H1 (cell line): ENCODE measurements at regions of chr15 and their contacts with region 1.

Region 1: GRCh38 chr15:66851226-66852071 is 149.4 kb downstream of the SMAD6 start:
- DNase-seq: peak; percentile 54 to 90
- H3K4me3 ChIP-seq: no peak overlapping the region
- H3K27ac ChIP-seq: no peak overlapping the region
- H3K4me1 ChIP-seq: no peaks in the 10 kb centered on the region; a peak in 2 of 7 replicates
- H3K27me3 ChIP-seq: peaks cover 0 to 11% (median 6%) of the 10 kb centered on the region in 4 experiments; a peak in 5 of 7 replicates
- CTCF ChIP-seq: peak; percentile 95 to 97 (median 96)
- EP300 ChIP-seq: no peak
- POLR2A ChIP-seq: no peak
- RAD21 ChIP-seq: peak; percentile 80 to 90

Region 2: DNA sequence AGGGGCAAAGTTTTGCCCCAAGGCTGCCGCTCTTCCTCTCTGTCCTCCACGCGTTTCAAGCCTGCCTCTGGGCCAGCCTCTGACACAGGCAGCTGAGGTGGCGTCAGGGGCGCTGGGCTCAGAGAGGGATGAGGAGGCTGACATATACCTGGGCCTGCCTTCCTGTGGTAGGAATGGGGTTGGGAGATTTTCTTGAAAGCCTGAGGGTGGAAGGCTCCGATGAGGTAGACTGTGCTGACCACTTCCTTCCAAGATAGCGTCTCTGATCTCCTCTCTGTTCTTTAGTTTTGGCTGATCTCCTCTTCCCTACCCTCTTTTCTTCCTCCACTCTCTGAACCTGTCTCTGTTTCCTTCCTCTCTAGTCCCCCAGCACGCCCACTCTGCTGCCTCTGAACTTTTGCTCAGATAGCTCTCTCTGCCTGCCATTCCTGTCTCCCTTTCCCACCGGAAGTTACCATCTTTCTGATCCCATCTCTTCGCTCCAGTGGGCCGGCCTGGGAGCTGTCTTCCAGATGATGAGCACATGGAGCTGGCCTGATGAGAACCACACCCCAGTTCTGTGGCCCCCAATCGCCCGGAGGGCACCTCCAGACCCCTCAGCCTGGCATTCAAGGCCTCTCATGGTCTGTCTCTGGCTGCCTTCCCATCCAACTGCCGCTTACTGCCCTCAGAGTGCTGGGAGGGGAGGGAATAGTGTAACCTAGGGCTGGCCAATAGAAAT is 253.2 kb before region 1 on chr15:
- CTCF ChIA-PET with region 1: interaction called, 105 read pairs
- POLR2A ChIA-PET with region 1: no interaction called
- DNase-seq: no peak
- H3K4me3 ChIP-seq: no peak overlapping the region
- H3K27ac ChIP-seq: no peak overlapping the region
- H3K4me1 ChIP-seq: no peaks in the 10 kb centered on the region
- H3K27me3 ChIP-seq: no peaks in the 10 kb centered on the region
- CTCF ChIP-seq: no peak
- EP300 ChIP-seq: no peak
- POLR2A ChIP-seq: no peak
- RAD21 ChIP-seq: no peak

Region 3: GRCh38 chr15:66619151-66619903 is 232.1 kb before region 1 on chr15:
- CTCF ChIA-PET with region 1: interaction called, 24 read pairs
- POLR2A ChIA-PET with region 1: no interaction called
- DNase-seq: peak; percentile 44 to 91
- H3K4me3 ChIP-seq: no peak overlapping the region
- H3K27ac ChIP-seq: no peak overlapping the region
- H3K4me1 ChIP-seq: peaks cover 18 to 31% (median 24%) of the 10 kb centered on the region in 4 experiments
- H3K27me3 ChIP-seq: peaks cover 0 to 5% (median 1%) of the 10 kb centered on the region in 4 experiments; a peak in 4 of 7 replicates
- CTCF ChIP-seq: peak; percentile 82 to 89 (median 88)
- EP300 ChIP-seq: no peak
- POLR2A ChIP-seq: no peak
- RAD21 ChIP-seq: peak; percentile 82 to 86

Region 4: GRCh38 chr15:66707310-66708082 is 144.0 kb before region 1 on chr15:
- CTCF ChIA-PET with region 1: interaction called, 57 read pairs
- POLR2A ChIA-PET with region 1: no interaction called
- DNase-seq: peak; percentile 70 to 74
- H3K4me3 ChIP-seq: no peak overlapping the region; a peak in 1 of 8 replicates
- H3K27ac ChIP-seq: no peak overlapping the region
- H3K4me1 ChIP-seq: peaks cover 0 to 25% (median 14%) of the 10 kb centered on the region in 4 experiments; a peak in 6 of 7 replicates
- H3K27me3 ChIP-seq: peaks cover 18 to 34% (median 27%) of the 10 kb centered on the region in 4 experiments; a peak in 6 of 7 replicates
- CTCF ChIP-seq: peak; percentile 57 to 72 (median 61)
- EP300 ChIP-seq: no peak
- POLR2A ChIP-seq: no peak
- RAD21 ChIP-seq: peak; percentile 53 to 70

Region 5: GRCh38 chr15:66774001-66774814 is 77.2 kb before region 1 on chr15:
- CTCF ChIA-PET with region 1: interaction called, 202 read pairs
- POLR2A ChIA-PET with region 1: interaction called, 4 read pairs
- DNase-seq: peak; percentile 68 to 95
- H3K4me3 ChIP-seq: peak overlapping the region in 1 of 4 experiments; percentile 23; a peak in 3 of 8 replicates
- H3K27ac ChIP-seq: peak overlapping the region; percentile 56
- H3K4me1 ChIP-seq: peaks cover 11 to 24% (median 18%) of the 10 kb centered on the region in 4 experiments
- H3K27me3 ChIP-seq: no peaks in the 10 kb centered on the region
- CTCF ChIP-seq: peak; percentile 94 to 95 (median 95)
- EP300 ChIP-seq: peak in 1 of 2 experiments; percentile 60; a peak in 1 of 3 replicates
- POLR2A ChIP-seq: no peak
- RAD21 ChIP-seq: peak; percentile 87 to 92

Region 6: DNA sequence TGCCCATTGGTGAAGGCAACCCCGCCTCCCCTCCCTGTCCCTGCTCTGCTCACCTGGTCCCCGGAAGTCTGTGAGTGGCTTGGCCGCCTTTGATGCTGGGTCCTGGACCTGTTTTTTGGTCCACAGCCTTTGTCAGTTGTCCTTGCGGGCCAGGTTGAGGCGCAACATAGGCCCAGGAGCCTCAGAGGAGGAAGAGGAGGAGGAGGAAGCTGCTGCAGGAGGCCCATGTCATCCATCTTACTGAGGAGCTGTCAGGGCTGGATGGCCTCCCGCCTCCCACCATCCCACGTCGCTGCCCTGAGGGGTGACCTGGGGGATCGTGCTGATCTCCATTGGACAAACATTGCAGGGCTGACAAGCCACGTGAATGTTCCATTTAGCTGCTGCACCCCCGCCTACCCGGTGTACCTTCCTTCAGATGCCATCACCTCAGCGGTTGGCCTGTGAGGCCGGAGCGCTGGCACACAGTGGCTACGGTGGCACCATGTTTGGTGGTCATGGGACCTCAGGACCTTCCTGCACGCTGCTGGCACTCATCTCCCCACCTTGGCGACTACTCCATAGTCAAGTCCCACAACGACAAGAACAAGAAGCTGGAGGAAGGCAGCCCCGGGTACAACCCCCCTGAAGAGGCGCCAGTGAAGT is 43.1 kb before region 1 on chr15:
- CTCF ChIA-PET with region 1: interaction called, 17 read pairs
- POLR2A ChIA-PET with region 1: no interaction called
- DNase-seq: no peak
- H3K4me3 ChIP-seq: no peak overlapping the region
- H3K27ac ChIP-seq: no peak overlapping the region
- H3K4me1 ChIP-seq: peaks cover 0 to 4% (median 4%) of the 10 kb centered on the region in 4 experiments; a peak in 4 of 7 replicates
- H3K27me3 ChIP-seq: peaks cover 0 to 2% (median 0%) of the 10 kb centered on the region in 4 experiments; a peak in 1 of 7 replicates
- CTCF ChIP-seq: no peak
- EP300 ChIP-seq: no peak
- POLR2A ChIP-seq: no peak
- RAD21 ChIP-seq: no peak

Region 7: GRCh38 chr15:66862878-66863335 is 11.5 kb after region 1 on chr15:
- CTCF ChIA-PET with region 1: interaction called, 27 read pairs
- POLR2A ChIA-PET with region 1: no interaction called
- DNase-seq: peak; percentile 77 to 95
- H3K4me3 ChIP-seq: no peak overlapping the region
- H3K27ac ChIP-seq: no peak overlapping the region
- H3K4me1 ChIP-seq: peaks cover 0 to 6% (median 3%) of the 10 kb centered on the region in 4 experiments; a peak in 5 of 7 replicates
- H3K27me3 ChIP-seq: no peaks in the 10 kb centered on the region
- CTCF ChIP-seq: peak; percentile 90 to 96 (median 95)
- EP300 ChIP-seq: no peak
- POLR2A ChIP-seq: no peak
- RAD21 ChIP-seq: peak; percentile 80 to 83

Region 8: GRCh38 chr15:67033571-67034044 is 182.2 kb after region 1 on chr15:
- CTCF ChIA-PET with region 1: no interaction called
- POLR2A ChIA-PET with region 1: no interaction called
- DNase-seq: peak in 1 of 2 experiments; percentile 59
- H3K4me3 ChIP-seq: peak overlapping the region; percentile 1 to 50 (median 6); a peak in 6 of 8 replicates
- H3K27ac ChIP-seq: no peak overlapping the region
- H3K4me1 ChIP-seq: peaks cover 11 to 48% (median 25%) of the 10 kb centered on the region in 4 experiments
- H3K27me3 ChIP-seq: peaks cover 2 to 34% (median 25%) of the 10 kb centered on the region in 4 experiments
- CTCF ChIP-seq: 0 out of 4 replicates have a peak, but pooled peaks of 1 of the 3 experiments have one; percentile 1
- EP300 ChIP-seq: no peak
- POLR2A ChIP-seq: no peak
- RAD21 ChIP-seq: peak; percentile 17 to 25; a peak in 2 of 4 replicates

Region 9: DNA sequence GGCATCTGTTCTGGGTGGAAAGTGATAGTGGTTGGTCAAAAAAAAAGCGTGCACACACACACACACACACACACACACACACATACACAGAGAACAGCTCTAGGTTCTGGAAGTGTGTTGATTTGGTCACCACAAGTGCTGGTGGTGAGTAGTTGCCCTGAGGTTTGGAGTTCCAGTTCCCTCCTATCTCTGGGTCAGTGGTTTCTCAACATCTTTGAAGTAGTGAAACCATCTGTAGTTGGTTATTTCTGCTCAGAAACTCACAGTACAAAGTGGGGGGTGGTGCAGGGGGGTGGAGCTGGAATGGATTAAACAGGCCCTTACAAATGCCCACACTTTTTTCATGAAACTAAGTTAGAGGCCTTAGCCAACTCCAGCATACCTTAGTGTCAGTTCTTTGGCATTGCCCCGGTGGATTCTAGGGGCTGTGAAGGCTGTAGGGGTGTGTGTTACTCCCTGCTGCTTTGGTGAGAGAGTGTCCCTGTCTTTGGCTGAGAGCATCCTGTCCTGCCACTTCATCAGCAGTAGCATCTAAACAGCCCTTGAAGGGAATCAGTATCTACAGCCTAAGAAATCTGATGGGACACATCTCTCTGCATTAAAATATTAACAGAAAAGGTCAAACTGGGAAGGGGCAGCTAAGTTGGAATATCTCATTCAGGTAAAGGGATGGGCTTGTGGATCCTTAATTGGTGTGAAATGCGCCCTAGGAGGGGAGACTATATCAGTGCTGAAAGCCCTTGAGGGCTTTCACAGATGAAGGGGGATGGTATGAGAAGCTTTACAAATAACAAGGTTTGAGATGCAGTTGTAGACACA is 234.6 kb after region 1 on chr15:
- CTCF ChIA-PET with region 1: no interaction called
- POLR2A ChIA-PET with region 1: no interaction called
- DNase-seq: no peak
- H3K4me3 ChIP-seq: no peak overlapping the region
- H3K27ac ChIP-seq: no peak overlapping the region
- H3K4me1 ChIP-seq: peaks cover 3 to 15% (median 11%) of the 10 kb centered on the region in 4 experiments
- H3K27me3 ChIP-seq: no peaks in the 10 kb centered on the region
- CTCF ChIP-seq: no peak
- EP300 ChIP-seq: no peak
- POLR2A ChIP-seq: no peak
- RAD21 ChIP-seq: no peak